ENCODE measurements at regions of chr5 and their contacts with region 1.

Region 1: DNA sequence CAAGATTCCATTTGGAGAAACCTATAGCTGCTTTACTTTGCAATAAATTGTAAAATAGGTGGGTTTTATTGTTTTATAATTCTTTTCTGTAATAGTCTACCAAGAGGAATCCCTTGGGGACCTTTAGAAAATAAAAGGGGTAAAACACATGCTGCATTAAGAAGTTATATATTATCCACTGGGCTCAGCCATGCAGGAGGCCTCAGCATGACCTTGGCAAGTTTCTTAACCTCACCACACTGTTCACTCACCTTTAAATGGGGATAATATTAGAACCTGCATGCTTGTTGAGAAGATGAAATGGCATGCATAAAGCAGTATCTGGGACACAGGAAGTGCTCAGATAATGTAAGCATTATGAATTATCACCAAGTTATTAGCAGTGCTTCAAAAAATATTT is 120.2 kb downstream of the SEMA5A start:
- DNase-seq: no peak
- H3K4me3 ChIP-seq: no peak overlapping the region
- H3K27ac ChIP-seq: no peak overlapping the region
- H3K4me1 ChIP-seq: no peaks in the 10 kb centered on the region
- H3K27me3 ChIP-seq: no peaks in the 10 kb centered on the region
- CTCF ChIP-seq: no peak
- POLR2A ChIP-seq: no peak

Region 2: GRCh38 chr5:9456435-9457042 is 30.8 kb after region 1 on chr5:
- intact Hi-C with region 1: loop called (anchors 2 kb)
- DNase-seq: no peak
- H3K4me3 ChIP-seq: no peak overlapping the region
- H3K27ac ChIP-seq: peak overlapping the region; percentile 26 to 35
- H3K4me1 ChIP-seq: no peaks in the 10 kb centered on the region
- H3K27me3 ChIP-seq: no peaks in the 10 kb centered on the region
- CTCF ChIP-seq: no peak
- POLR2A ChIP-seq: no peak